ENCODE measurements at regions of chr11 and their contacts with region 1.

Region 1: DNA sequence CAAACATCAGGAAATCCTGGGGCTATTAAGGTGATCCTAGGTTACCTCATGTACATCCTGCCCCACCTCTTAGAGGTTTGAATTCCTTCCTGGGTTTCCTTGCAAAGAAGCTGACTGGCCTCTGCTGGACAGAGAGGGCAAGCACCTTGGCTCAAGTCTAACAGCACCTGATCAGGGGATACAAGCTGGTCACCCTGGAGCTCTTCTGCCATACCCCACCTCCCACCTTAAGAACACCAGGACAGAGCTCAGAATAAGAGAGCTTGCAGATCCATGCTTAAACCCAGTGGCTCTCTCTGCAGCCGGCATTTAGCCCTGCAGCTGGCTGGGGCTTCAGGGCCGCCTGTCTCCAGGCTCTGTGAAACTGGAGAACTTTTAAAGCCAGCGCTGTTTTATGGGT is 386.6 kb upstream of the NARS2 start:
- DNase-seq: peak; percentile 61
- ATAC-seq: peak; percentile 89
- H3K4me3 Mint-ChIP-seq: peak overlapping the region; percentile 72
- H3K27ac Mint-ChIP-seq: no peak overlapping the region
- H3K4me1 Mint-ChIP-seq: peaks cover 33% of the 10 kb centered on the region
- H3K27me3 Mint-ChIP-seq: peaks cover 17% of the 10 kb centered on the region
- CTCF ChIP-seq: peak; percentile 21; the same call in 1 of the 2 replicates

Region 2: DNA sequence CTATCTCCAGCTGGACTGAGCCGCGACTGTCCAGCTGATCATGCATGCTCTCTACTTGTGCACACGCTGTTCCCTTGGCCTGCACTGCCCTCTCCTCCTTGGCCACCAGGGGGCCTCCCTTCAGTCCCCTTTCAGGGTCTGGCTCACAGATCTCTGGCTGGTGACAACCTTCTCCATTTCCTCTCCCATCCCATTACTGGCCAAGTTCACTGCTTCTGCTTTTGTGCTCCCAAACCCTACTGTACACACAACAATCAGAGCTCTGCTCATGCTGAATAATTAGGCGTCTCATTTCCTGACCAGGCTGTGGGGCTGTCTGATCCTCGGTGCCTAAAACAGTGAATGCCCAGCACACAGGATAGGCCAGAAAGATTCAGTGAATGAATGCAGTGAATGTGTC is 162.6 kb before region 1 on chr11:
- CTCF ChIA-PET with region 1: interaction called, 79 read pairs
- POLR2A ChIA-PET with region 1: no interaction called
- DNase-seq: peak; percentile 82
- ATAC-seq: peak; percentile 90
- H3K4me3 Mint-ChIP-seq: no peak overlapping the region
- H3K27ac Mint-ChIP-seq: no peak overlapping the region
- H3K4me1 Mint-ChIP-seq: peaks cover 28% of the 10 kb centered on the region
- H3K27me3 Mint-ChIP-seq: no peaks in the 10 kb centered on the region
- CTCF ChIP-seq: peak; percentile 93

Region 3: DNA sequence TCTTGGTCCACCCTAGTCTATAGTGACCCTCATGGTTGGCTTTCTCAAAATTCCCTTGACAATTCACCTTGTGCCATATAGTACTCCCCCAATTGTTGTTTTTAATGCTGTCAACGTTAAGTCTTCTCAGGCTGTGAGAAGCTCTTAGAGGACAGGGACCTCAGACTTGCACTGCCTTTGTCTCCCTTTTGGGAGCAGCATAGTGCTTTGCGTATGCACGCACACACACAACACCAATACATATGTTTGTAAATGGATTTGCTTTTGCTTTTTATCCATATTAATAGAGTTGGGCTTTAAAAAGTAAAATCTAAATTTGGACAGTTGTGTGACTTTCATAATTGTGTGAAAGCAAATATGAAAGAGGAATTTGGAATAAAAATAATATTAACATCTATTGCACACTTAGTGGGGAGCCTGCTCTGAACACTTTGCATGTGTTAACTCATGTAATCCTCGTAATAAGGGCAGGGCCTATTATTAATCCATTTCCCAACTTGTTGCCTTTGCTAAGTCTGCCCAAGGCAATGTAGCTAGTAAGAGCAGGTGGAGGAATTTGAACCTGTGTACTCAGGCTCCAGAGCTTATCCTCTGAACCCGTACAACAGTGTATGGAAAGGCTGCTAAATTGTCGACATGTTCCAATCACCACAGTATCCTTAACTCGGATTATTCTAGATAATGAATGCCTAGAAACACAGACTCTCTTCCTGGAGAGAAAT is 128.9 kb before region 1 on chr11:
- CTCF ChIA-PET with region 1: interaction called, 20 read pairs
- POLR2A ChIA-PET with region 1: no interaction called
- DNase-seq: no peak
- ATAC-seq: no peak
- H3K4me3 Mint-ChIP-seq: no peak overlapping the region
- H3K27ac Mint-ChIP-seq: no peak overlapping the region
- H3K4me1 Mint-ChIP-seq: peaks cover 19% of the 10 kb centered on the region
- H3K27me3 Mint-ChIP-seq: no peaks in the 10 kb centered on the region
- CTCF ChIP-seq: no peak

Region 4: DNA sequence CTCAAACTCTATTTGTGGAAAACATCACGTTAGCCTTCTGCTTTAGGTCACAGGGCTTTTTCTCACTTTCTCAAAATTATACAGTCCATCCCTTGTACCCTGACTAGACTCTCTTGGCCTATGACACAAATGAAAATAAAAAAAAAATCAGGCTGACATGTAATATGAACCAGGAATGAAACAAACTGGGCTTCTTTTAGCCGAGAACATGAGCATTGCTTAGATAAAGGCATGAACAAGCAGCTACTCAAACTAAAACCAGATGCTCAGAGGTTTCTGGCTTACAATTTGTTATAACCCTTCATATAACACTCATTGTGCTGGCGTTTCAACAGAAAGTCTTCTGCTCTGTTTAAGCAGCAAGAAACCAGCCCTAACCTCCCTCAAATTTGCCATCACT is 121.0 kb before region 1 on chr11:
- CTCF ChIA-PET with region 1: interaction called, 24 read pairs
- POLR2A ChIA-PET with region 1: no interaction called
- DNase-seq: no peak
- ATAC-seq: no peak
- H3K4me3 Mint-ChIP-seq: no peak overlapping the region
- H3K27ac Mint-ChIP-seq: no peak overlapping the region
- H3K4me1 Mint-ChIP-seq: no peaks in the 10 kb centered on the region
- H3K27me3 Mint-ChIP-seq: no peaks in the 10 kb centered on the region
- CTCF ChIP-seq: no peak

Region 5: GRCh38 chr11:78929207-78929905 is 31.9 kb before region 1 on chr11:
- CTCF ChIA-PET with region 1: interaction called, 20 read pairs
- POLR2A ChIA-PET with region 1: no interaction called
- DNase-seq: peak; percentile 52
- ATAC-seq: peak; percentile 94
- H3K4me3 Mint-ChIP-seq: peak overlapping the region; percentile 48
- H3K27ac Mint-ChIP-seq: peak overlapping the region; percentile 53
- H3K4me1 Mint-ChIP-seq: peaks cover 58% of the 10 kb centered on the region
- H3K27me3 Mint-ChIP-seq: peaks cover 98% of the 10 kb centered on the region
- CTCF ChIP-seq: no peak

Measured in WTC11 (cell line).